CD8-positive, alpha-beta T cell (primary cell): ENCODE measurements at regions of chr17 and their contacts with region 1.

Region 1: GRCh38 chr17:37358830-37359681 is 16.7 kb upstream of the C17orf78 start:
- DNase-seq: peak; percentile 77 to 97 (median 88)
- ATAC-seq: peak; percentile 95
- H3K4me3 ChIP-seq: peak overlapping the region; percentile 78 to 98
- H3K4me3 Mint-ChIP-seq: peak overlapping the region; percentile 87
- H3K27ac ChIP-seq: peak overlapping the region; percentile 66 to 82
- H3K27ac Mint-ChIP-seq: peak overlapping the region; percentile 87
- H3K4me1 ChIP-seq: peaks cover 16% of the 10 kb centered on the region
- H3K4me1 Mint-ChIP-seq: peaks cover 18% of the 10 kb centered on the region
- H3K27me3 ChIP-seq: no peaks in the 10 kb centered on the region
- H3K27me3 Mint-ChIP-seq: no peaks in the 10 kb centered on the region
- CTCF ChIP-seq: no peak

Region 2: DNA sequence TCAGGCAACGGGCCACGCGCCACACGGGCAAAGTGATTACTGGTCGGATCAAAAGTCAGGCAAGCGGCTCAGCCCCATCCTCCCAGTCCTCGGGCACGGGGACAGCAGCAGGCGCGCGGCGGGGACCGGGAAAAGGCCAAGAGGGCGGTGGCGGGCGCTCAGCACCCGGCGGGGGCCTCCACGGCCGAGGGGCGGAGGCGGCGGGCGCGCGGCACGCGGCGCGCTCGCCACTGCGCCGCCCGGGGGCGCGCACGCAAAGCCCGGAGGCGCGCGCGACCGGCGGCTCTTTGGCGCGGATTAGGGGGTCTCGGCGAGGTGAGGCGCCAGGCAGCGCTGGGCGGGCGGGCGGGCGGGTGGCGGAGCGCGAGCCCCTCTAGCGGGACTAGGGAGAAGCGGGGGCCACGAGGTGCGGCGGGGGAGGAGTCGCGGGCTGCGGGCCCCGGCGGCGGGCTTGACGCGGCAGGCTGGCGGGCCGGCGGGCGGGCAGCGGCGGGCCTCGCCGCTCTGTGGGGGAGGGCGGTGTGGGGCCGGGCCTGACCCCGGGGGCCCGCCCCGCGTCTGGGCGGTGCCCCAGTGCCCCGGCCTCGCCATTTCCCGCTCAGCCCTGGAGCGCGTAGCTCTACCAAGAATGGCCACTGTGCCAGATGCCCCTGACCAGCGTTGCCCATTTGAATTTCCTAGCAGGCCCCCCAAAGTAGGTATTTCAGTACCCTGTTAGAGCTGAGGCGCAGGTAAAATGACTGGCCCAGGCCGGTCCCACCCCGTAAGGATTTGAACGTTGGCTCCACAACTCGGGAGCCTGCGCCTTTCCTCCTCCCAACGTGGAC is 47.8 kb after region 1 on chr17 and contains the starts of genes ACACA and TADA2A:
- CTCF ChIA-PET with region 1: no interaction called
- POLR2A ChIA-PET with region 1: interaction called, 5 read pairs
- intact Hi-C with region 1: loop called (anchors 1 kb)
- DNase-seq: peak; percentile 40 to 88 (median 70)
- ATAC-seq: peak; percentile 91
- H3K4me3 ChIP-seq: peak within 1 kb of the TSS; percentile 87 to 90
- H3K4me3 Mint-ChIP-seq: peak within 1 kb of the TSS; percentile 95
- H3K27ac ChIP-seq: peak within 1 kb of the TSS; percentile 61 to 78
- H3K27ac Mint-ChIP-seq: peak within 1 kb of the TSS; percentile 93
- H3K4me1 ChIP-seq: peaks cover 14% of the 10 kb centered on the region
- H3K4me1 Mint-ChIP-seq: peaks cover 43% of the 10 kb centered on the region
- H3K27me3 ChIP-seq: no peaks in the 10 kb centered on the region
- H3K27me3 Mint-ChIP-seq: no peaks in the 10 kb centered on the region
- CTCF ChIP-seq: no peak
- total RNA-seq, gene ACACA: 30.7 to 34.2 TPM
- total RNA-seq, gene TADA2A: 5.3 to 11.1 TPM